Activated CD4-positive, alpha-beta memory T cell treated with anti-CD3 and anti-CD28 coated beads for 36 hours (primary cell): ENCODE measurements at regions of chr12 and their contacts with region 1.

Region 1: GRCh38 chr12:15899282-15899870 is 11.8 kb upstream of the DERA start:
- DNase-seq: no peak
- H3K4me3 Mint-ChIP-seq: no peak overlapping the region
- H3K27ac Mint-ChIP-seq: peak overlapping the region; percentile 6
- H3K4me1 Mint-ChIP-seq: no peaks in the 10 kb centered on the region
- H3K27me3 Mint-ChIP-seq: no peaks in the 10 kb centered on the region

Region 2: DNA sequence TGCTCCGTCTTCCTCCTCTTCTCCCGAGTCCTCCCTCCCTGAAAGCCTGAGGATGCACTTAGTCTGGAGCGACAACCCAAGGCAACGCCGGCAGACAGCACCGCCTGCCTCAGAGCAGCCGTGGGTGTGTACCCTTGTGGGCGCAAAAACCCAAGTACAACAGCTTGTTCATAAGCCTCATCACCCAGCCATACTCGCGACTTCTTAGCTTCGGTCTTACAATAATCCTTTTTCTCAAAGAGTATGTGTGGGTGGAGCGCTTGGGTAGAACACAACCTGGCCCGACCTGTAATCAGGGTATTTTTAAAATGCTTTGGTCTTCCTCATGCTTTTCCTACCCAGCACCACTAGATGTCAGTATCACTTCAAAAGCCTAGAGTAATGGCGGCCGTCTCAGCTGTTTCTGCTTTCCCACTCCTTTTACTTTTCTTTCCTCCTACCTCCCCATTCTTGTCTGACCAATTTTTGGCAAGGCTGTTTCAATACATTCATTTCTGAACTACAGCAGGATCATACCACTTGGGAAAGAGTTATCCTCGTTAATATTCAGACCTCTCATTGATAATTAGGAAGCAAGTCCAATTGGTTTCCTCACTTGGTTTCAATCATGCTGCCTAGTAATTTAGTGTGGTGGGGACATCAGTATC is 309.1 kb before region 1 on chr12:
- CTCF ChIA-PET with region 1: interaction called, 3 read pairs
- POLR2A ChIA-PET with region 1: no interaction called
- intact Hi-C with region 1: loop called (anchors 1 kb)
- DNase-seq: peak; percentile 56
- H3K4me3 Mint-ChIP-seq: peak overlapping the region; percentile 70
- H3K27ac Mint-ChIP-seq: peak overlapping the region; percentile 21
- H3K4me1 Mint-ChIP-seq: peaks cover 8% of the 10 kb centered on the region
- H3K27me3 Mint-ChIP-seq: no peaks in the 10 kb centered on the region

Region 3: GRCh38 chr12:15856097-15856982 is 43.0 kb before region 1 on chr12:
- CTCF ChIA-PET with region 1: interaction called, 13 read pairs
- POLR2A ChIA-PET with region 1: no interaction called
- intact Hi-C with region 1: no loop called
- DNase-seq: peak; percentile 22
- H3K4me3 Mint-ChIP-seq: no peak overlapping the region
- H3K27ac Mint-ChIP-seq: no peak overlapping the region
- H3K4me1 Mint-ChIP-seq: no peaks in the 10 kb centered on the region
- H3K27me3 Mint-ChIP-seq: peaks cover 5% of the 10 kb centered on the region

Region 4: GRCh38 chr12:15882118-15882971 is 17.0 kb before region 1 on chr12 and contains the start of gene STRAP:
- CTCF ChIA-PET with region 1: interaction called, 10 read pairs
- POLR2A ChIA-PET with region 1: no interaction called
- intact Hi-C with region 1: loop called (anchors 1 kb)
- DNase-seq: peak; percentile 98
- H3K4me3 Mint-ChIP-seq: peak within 1 kb of the TSS; percentile 96
- H3K27ac Mint-ChIP-seq: peak within 1 kb of the TSS; percentile 94
- H3K4me1 Mint-ChIP-seq: peaks cover 48% of the 10 kb centered on the region
- H3K27me3 Mint-ChIP-seq: no peaks in the 10 kb centered on the region
- total RNA-seq, gene STRAP: 135 to 140 TPM

Region 5: DNA sequence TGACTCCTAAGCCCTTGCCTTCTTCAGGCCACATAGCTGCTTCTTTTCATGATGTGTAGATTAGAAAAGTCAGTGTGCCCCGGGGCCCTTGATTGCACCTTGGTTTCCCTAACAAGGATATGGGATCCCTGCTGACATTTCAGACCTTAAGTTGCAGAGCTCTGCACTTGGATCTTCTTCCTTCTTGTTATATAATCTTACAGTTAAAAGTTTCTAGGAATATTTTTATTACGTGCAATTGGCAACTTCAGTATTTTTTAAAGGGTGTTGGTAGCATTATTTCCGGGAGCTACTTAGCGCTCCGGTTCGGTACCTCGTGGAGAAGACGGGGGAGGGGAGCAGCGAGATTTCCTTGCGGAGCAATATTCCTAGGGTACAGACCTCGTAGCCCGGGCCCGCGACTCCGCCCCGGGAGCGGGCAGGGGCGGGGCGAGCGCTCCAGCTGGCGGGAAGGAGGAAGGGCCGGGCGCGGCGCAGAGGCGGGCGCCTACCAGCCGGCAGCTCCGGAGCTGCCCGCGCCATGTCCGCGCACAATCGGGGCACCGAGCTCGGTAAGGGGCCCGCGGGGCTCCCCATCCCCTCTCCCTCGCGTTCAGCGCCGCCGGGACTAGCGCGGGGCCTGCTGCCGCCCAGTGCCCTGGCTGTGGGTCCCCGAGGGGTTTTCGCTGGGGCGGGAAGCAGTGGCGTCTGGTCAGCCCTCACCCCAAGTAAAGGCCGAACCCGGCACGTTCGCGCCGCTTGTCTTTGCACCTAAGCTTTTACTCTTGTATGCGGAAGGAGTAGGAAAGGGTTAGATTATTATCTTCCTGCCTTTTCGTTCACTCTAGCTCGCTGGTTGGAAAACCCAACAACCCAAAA is 11.7 kb after region 1 on chr12 and contains the start of gene DERA:
- CTCF ChIA-PET with region 1: interaction called, 35 read pairs
- POLR2A ChIA-PET with region 1: no interaction called
- intact Hi-C with region 1: no loop called
- DNase-seq: peak; percentile 70
- H3K4me3 Mint-ChIP-seq: peak within 1 kb of the TSS; percentile 90
- H3K27ac Mint-ChIP-seq: peak within 1 kb of the TSS; percentile 85
- H3K4me1 Mint-ChIP-seq: peaks cover 16% of the 10 kb centered on the region
- H3K27me3 Mint-ChIP-seq: no peaks in the 10 kb centered on the region
- total RNA-seq, gene DERA: 28.4 to 29.0 TPM

Region 6: GRCh38 chr12:15931590-15932053 is 32.2 kb after region 1 on chr12:
- CTCF ChIA-PET with region 1: no interaction called
- POLR2A ChIA-PET with region 1: no interaction called
- intact Hi-C with region 1: no loop called
- DNase-seq: no peak
- H3K4me3 Mint-ChIP-seq: no peak overlapping the region
- H3K27ac Mint-ChIP-seq: no peak overlapping the region
- H3K4me1 Mint-ChIP-seq: peaks cover 2% of the 10 kb centered on the region
- H3K27me3 Mint-ChIP-seq: no peaks in the 10 kb centered on the region